Calu3 (cell line): ENCODE measurements at regions of chr17 and their contacts with region 1.

Region 1: GRCh38 chr17:81553018-81553615 is 964 bp upstream of the FAAP100 start:
- DNase-seq: peak; percentile 67
- H3K4me3 Mint-ChIP-seq: peak overlapping the region; percentile 92
- H3K27ac Mint-ChIP-seq: peak overlapping the region; percentile 82
- H3K4me1 Mint-ChIP-seq: peaks cover 24% of the 10 kb centered on the region
- H3K27me3 Mint-ChIP-seq: no peaks in the 10 kb centered on the region
- CTCF ChIP-seq: no peak

Region 2: DNA sequence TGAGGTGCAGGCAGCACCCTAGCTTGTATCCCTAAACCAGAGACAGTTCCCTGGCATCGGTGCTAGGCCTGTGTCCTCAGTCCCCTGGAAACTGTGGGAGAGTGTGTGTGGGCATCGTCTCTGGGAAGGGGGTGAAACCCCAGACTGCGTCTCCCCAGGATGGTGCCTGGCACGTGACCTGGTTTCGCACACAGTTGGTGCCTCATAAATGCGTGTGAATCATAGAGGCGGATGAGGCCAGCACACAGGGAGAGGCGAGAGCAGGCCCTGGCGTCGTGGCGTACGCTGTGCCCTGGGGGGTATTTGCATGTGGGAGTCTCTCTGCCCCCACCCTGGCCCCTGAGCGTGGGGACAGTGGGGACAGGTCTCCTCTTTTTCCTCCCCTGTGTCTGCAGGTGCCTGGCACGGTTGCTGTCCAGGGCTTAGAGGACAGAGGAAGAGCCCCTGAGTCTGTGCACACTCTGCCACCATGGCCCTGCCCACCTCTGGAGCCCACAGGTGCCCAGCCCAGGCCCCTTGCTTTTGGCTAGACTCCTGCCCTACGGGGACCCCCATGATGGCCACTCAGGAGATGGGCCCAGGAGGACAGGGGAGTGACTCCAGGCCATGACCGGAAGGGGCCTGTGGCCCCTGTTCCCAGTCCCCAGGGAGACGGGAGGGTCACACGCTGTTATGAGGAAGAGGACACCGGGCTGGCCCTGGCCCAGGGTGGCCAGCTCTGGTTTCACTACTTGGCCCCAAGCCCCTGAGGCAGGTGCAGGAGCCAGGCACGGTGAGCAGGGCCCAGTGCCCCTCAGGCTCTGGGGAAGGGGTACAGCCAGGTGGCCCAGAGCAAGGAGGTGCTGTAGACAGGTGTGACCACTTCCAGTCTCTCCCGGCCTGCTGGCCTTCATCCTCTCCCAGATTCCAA is 26.2 kb before region 1 on chr17:
- CTCF ChIA-PET with region 1: no interaction called
- intact Hi-C with region 1: no loop called
- DNase-seq: no peak
- H3K4me3 Mint-ChIP-seq: no peak overlapping the region
- H3K27ac Mint-ChIP-seq: no peak overlapping the region
- H3K4me1 Mint-ChIP-seq: no peaks in the 10 kb centered on the region
- H3K27me3 Mint-ChIP-seq: peaks cover 50% of the 10 kb centered on the region
- CTCF ChIP-seq: no peak

Region 3: GRCh38 chr17:81566461-81567126 is 13.5 kb after region 1 on chr17:
- CTCF ChIA-PET with region 1: interaction called, 10 read pairs
- intact Hi-C with region 1: no loop called
- DNase-seq: peak; percentile 69
- H3K4me3 Mint-ChIP-seq: peak overlapping the region; percentile 56
- H3K27ac Mint-ChIP-seq: peak overlapping the region; percentile 57
- H3K4me1 Mint-ChIP-seq: peaks cover 35% of the 10 kb centered on the region
- H3K27me3 Mint-ChIP-seq: no peaks in the 10 kb centered on the region
- CTCF ChIP-seq: no peak

Region 4: DNA sequence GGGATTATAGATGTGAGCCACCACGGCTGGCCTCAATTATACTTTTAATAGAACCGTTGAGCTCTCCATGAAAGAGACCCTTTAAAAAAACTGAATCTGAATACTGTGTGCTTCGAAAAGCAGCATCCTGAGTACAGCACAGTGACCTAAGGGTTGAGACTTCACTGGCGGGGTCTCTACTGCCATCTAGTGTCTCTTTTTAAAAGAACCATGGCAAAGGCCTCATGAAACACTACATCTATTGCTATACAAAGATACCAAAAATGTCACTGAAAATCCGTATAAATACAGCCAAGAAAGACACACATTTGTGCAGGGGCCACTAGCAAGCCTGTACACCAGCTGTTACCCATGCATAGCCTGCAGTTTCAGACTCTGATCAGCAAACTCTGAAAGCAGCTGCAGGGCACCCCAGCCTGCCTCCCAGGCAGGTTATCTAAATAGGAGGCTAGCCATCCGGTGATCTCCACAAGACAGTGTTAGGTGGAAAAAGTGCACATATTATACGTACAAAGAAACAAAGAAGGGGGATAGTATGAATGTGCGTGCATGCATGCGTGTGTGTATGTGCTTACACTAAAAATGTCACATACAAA is 48.5 kb after region 1 on chr17:
- CTCF ChIA-PET with region 1: no interaction called
- intact Hi-C with region 1: loop called (anchors 2 kb)
- DNase-seq: peak; percentile 55
- H3K4me3 Mint-ChIP-seq: no peak overlapping the region
- H3K27ac Mint-ChIP-seq: peak overlapping the region; percentile 35
- H3K4me1 Mint-ChIP-seq: peaks cover 7% of the 10 kb centered on the region
- H3K27me3 Mint-ChIP-seq: no peaks in the 10 kb centered on the region
- CTCF ChIP-seq: peak; percentile 64